Lower lobe of right lung (tissue), 2 donors: ENCODE measurements at regions of chr2 and their contacts with region 1.

Region 1: GRCh38 chr2:200483729-200484198 is 26.1 kb downstream of the KCTD18 start:
- DNase-seq: peak; percentile 71
- ATAC-seq: peak; percentile 73 to 85
- H3K4me3 ChIP-seq: no peak overlapping the region
- H3K27ac ChIP-seq: no peak overlapping the region
- H3K4me1 ChIP-seq: peaks cover 10% of the 10 kb centered on the region
- H3K27me3 ChIP-seq: no peaks in the 10 kb centered on the region
- CTCF ChIP-seq: peak; percentile 50

Region 2: DNA sequence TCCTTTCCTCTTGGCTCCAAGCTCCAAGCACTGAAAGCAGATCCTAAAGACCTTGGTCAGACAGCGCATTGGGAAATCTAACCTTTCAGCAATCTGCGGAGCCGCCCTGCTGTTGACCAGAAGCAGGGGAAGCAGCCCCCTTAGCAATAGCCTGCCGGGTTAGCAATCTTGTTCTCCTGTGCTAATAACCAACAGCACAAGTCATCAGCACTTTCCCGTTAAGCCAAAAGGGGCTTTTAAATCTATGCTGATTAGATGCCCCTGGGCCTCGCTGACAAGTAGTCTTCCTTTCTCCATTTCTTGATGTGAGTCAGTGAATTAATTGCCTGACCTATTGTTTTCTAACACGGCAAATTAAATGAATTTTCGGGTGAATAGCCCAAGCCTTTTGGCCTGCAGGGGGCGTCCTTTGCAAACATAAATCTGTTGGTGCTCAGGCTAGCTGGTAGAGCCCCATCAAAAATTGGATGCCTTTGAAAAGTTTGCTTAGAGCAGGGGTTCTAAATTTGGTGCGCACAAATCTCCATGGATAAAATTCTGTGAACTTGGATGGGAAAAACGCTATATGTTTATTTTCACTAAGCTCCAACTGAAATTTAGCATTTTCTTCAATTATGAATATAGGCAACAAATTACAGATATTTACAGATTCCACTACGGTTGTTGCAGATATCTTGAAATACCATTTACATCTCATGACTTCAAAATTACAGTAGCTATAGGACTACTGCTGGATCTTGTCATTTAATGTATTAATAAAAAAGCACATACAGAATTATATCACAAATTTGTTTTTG is 503.7 kb before region 1 on chr2:
- intact Hi-C with region 1: loop called (anchors 5 kb)
- DNase-seq: peak; percentile 85
- ATAC-seq: peak; percentile 85 to 87
- H3K4me3 ChIP-seq: peak overlapping the region; percentile 18
- H3K27ac ChIP-seq: no peak overlapping the region
- H3K4me1 ChIP-seq: peaks cover 6% of the 10 kb centered on the region
- H3K27me3 ChIP-seq: no peaks in the 10 kb centered on the region
- CTCF ChIP-seq: peak; percentile 90